K562 (cell line): ENCODE measurements at regions of chr5 and their contacts with region 1.

Region 1: DNA sequence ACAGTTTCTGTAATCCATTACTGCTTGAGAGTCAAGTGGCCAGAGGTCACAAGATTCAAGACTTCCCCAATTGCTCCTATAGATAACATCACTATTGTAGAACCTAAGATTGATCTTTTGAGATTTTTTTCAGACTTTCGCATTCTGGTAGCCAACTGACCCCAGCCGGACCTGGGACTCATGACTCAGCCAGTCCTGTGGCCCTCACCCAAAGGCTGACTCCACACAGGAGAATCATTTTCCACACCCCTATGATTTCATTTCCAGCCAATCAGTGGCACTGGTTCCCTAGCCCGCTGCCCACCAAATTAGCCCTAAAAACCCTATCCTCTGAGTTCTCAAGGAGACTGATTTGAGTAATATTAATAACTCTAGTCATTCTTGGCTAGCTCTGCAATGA is 36.2 kb downstream of the TARS1 start:
- DNase-seq: no peak
- ATAC-seq: no peak
- H3K4me3 ChIP-seq: no peak overlapping the region
- H3K27ac ChIP-seq: no peak overlapping the region
- H3K4me1 ChIP-seq: peaks cover 0 to 19% of the 10 kb centered on the region in 2 experiments; a peak in 2 of 5 replicates
- H3K27me3 ChIP-seq: no peaks in the 10 kb centered on the region
- CTCF ChIP-seq: no peak
- EP300 ChIP-seq: no peak
- POLR2A ChIP-seq: no peak
- RAD21 ChIP-seq: no peak

Region 2: GRCh38 chr5:32542216-32543059 is 934.6 kb before region 1 on chr5:
- CTCF ChIA-PET with region 1: no interaction called
- POLR2A ChIA-PET with region 1: no interaction called
- in situ Hi-C with region 1: no loop called
- intact Hi-C with region 1: no loop called
- DNase-seq: peak in 2 of 4 experiments; percentile 11 to 42
- ATAC-seq: peak; percentile 73
- H3K4me3 ChIP-seq: no peak overlapping the region
- H3K27ac ChIP-seq: peak overlapping the region; percentile 57; the same call in 2 of the 3 replicates
- H3K4me1 ChIP-seq: peaks cover 0 to 6% of the 10 kb centered on the region in 2 experiments; a peak in 3 of 5 replicates
- H3K27me3 ChIP-seq: no peaks in the 10 kb centered on the region
- CTCF ChIP-seq: no peak
- EP300 ChIP-seq: no peak
- POLR2A ChIP-seq: no peak
- RAD21 ChIP-seq: no peak

Region 3: DNA sequence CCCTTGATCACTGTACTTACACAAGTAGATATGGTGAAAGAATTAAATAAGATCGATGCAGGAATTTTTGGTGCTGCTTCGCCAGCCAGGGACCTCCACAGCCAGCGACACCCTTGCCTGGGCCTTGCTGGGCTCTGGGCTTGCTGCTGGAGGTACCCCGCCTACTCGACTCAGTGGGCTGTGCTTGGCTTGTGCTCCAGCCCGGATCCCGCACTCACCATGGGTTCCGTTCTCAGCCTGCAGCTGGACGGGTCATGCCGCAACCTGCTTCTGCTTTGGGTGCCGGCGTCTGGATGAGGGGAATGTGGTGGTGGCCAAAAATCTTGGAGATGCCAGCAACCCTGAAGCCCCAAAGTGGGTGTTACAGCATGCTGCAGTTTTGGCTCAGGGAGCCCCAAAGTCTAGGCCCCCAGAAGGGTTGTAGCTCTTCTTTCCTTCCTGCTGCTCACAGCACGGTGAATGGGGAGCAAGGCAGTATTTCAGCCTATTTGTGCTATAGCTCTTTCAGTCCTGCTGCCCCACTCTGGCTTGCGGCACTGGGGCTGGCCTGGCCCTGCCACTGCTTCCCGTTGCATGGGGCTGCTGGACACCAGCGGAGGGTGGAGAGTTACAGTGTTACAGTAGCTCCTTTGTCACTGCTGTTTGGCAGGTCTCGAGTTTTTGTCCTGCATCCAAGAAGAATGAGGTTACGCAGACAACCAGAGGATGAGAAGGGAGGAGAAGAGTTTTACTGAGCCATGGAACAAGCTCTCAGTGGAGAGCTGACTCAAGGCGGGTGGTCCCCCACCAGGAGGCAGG is 11.8 kb after region 1 on chr5:
- CTCF ChIA-PET with region 1: no interaction called
- POLR2A ChIA-PET with region 1: interaction called, 10 read pairs
- in situ Hi-C with region 1: no loop called
- intact Hi-C with region 1: no loop called
- DNase-seq: no peak
- ATAC-seq: peak; percentile 47
- H3K4me3 ChIP-seq: no peak overlapping the region
- H3K27ac ChIP-seq: no peak overlapping the region
- H3K4me1 ChIP-seq: peaks cover 0 to 4% of the 10 kb centered on the region in 2 experiments; a peak in 1 of 5 replicates
- H3K27me3 ChIP-seq: peaks cover 0 to 7% of the 10 kb centered on the region in 2 experiments; a peak in 1 of 5 replicates
- CTCF ChIP-seq: no peak
- EP300 ChIP-seq: no peak
- POLR2A ChIP-seq: no peak
- RAD21 ChIP-seq: no peak

Region 4: DNA sequence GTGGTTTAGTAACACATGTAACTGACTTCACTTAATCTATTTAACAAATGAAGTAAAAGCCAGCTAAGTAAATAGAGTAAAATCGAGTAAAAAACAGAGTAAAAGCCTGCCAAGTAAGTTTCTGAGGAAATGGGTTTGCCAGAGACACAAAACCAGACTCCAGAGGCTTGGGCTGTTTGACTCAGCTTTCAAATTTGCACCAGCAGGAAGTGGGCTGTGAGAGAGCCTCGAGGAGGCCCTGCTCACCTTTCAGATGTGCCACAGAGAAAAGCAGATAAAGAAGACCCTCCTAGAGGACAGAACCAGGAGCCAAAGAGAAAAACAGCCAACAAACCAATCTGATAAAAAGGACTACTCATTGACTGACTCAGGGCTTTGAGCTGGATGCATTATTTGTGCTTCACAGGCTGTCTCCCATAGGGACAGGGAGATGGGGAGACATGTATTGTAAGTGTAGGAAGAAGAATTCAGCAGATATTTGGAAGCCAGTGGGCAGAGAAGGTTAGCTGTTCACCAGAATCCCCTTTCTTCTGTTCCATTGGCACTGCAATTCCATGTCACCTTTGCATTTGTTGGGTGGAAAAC is 545.2 kb after region 1 on chr5:
- CTCF ChIA-PET with region 1: no interaction called
- POLR2A ChIA-PET with region 1: no interaction called
- in situ Hi-C with region 1: no loop called
- intact Hi-C with region 1: no loop called
- DNase-seq: no peak
- ATAC-seq: peak; percentile 26; the same call in 1 of the 3 replicates
- H3K4me3 ChIP-seq: no peak overlapping the region
- H3K27ac ChIP-seq: no peak overlapping the region
- H3K4me1 ChIP-seq: no peaks in the 10 kb centered on the region
- H3K27me3 ChIP-seq: no peaks in the 10 kb centered on the region
- CTCF ChIP-seq: no peak
- EP300 ChIP-seq: no peak
- POLR2A ChIP-seq: no peak
- RAD21 ChIP-seq: no peak